AG04449 (cell line): ENCODE measurements at regions of chr19 and their contacts with region 1.

Region 1: DNA sequence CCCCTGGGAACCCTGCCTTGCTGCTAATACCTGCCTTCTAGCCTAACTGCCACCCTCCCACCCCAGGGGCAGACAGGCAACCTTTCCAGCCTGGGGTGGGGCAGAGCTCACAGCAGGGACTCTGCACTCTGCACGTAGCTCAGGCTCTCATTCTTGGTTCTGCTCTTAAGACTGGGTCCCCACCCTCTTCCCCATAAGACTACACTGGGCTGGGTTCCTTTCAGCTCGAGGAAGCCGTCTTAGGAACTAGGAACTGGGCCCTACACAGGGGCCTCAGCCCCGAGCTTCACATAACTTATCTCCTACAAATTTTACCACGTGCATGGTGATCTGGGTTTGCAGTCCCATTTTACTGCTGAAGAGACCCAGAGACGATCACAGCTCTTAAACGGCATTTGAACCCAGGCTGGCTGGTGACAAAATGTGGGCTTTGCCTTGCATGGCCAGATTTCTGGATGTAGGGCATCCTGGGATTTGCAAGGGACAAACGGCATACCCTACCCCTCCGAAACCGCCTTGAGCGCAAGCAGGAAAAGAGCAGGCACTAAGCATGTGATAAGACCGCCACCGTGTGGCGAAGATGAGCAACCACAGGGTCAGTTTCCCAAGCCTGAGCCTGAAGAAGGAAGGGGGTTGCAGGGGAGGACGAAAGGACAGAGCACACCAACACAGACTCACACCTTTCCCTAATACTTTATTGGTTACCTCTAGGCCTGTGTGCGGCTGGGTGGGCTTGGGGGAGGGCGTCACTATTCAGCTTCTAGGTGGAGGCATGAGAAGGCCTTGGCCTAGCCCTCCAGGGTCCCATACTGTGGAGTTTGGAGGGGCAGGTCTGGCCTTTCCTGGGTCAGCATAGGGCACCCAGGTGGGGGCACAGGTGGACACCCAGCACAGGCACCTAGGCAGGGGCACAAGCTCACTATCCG is 5.1 kb downstream of the JUNB start:
- DNase-seq: no peak
- H3K4me3 ChIP-seq: no peak overlapping the region
- CTCF ChIP-seq: peak; percentile 92

Region 2: DNA sequence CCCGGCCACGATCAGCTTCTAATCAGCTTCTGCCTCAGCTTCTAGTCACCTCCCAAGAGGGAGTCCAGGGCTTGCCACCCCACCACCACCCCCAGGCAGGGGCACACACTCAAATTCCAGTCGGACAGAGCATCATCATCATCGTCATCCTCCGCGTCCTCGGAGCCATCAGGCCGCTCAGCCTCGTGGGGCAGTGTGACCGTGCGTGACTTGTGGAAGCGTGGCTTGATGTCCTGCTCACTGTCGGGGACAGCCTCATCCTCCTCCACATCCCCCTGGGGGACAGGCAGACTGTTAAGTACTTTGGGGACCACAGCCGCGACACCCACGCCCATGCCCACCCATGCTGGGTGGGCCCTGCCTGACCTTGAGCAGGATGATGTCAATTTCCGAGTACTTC is 85.2 kb before region 1 on chr19:
- CTCF ChIA-PET with region 1: interaction called, 13 read pairs
- POLR2A ChIA-PET with region 1: no interaction called
- DNase-seq: no peak
- H3K4me3 ChIP-seq: no peak overlapping the region
- CTCF ChIP-seq: no peak

Region 3: DNA sequence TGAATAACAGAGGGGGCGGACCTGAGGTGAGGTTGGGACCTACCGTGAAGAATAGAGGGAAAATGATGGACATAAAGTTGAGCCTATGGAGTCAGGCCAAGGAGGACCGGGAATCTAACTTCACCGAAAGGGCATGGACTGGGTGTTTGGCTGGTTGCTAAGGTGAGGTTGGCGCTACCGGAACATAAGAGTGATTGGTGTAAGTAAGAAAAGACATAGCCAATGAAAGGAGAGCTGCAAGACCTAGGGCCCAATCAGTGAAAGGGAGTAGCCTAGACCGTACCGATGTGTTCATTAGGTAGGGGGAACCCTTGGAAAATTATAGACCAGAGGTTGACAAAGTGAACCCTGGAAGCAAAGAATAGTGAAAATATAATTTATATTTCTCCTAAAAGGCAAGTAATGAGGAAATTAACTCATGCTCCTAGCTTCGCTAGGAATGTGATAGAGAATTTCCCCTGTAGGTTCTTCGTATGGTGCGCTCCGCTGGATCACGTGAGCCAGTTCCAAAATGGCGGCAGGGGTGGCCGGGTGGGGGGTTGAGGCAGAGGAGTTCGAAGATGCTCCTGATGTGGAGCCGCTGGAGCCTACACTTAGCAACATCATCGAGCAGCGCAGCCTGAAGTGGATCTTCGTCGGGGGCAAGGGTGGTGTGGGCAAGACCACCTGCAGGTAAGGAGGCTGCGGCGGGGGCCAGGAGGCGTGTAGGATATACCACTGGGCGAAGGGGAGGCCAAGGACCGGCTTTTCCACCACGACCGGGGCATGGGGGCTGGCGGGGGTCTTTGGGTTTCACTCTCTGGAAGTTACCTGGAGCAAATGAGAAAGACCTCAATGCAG is 59.2 kb before region 1 on chr19 and contains the start of gene GET3:
- CTCF ChIA-PET with region 1: interaction called, 20 read pairs
- POLR2A ChIA-PET with region 1: interaction called, 17 read pairs
- DNase-seq: peak; percentile 100
- H3K4me3 ChIP-seq: peak within 1 kb of the TSS; percentile 93
- CTCF ChIP-seq: no peak

Region 4: GRCh38 chr19:12782229-12783028 is 14.0 kb before region 1 on chr19:
- CTCF ChIA-PET with region 1: interaction called, 1,565 read pairs
- POLR2A ChIA-PET with region 1: interaction called, 158 read pairs
- DNase-seq: no peak
- H3K4me3 ChIP-seq: peak overlapping the region; percentile 55
- CTCF ChIP-seq: peak; percentile 31

Region 5: DNA sequence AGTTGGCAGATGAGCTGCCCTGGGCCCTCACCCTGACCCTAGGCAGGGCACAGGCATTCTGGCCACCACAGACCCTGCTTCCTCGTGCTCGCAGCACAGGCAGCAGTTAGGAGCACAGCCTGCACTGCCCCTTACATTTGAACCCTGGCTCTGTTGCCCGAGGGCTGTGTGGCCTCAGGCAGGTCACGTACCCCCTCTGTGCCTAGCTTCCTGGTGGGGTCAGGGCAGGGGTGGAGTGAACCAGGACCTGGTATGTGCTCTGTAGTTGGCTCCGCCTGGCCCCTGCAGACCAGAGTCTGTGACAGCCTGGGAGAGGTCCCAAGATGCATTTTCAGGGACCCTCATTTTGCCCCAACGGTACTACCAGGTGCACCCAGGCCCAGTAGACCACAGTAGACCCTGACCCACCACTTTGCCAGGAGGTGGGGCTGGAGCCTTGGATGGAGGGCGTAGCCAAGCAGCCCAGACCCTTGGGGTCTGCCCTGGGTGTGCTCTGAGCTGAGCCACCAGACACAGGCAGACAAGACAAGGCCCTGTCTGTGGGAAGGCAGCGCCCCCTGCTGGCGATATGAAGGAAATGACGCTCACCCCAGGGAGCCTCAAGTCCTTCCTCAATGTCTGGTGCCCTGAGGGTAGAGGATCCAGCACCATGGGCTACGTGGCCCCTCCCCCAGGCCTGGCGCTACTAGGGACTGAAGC is 297.1 kb after region 1 on chr19:
- CTCF ChIA-PET with region 1: no interaction called
- POLR2A ChIA-PET with region 1: no interaction called
- DNase-seq: no peak
- H3K4me3 ChIP-seq: no peak overlapping the region
- CTCF ChIP-seq: peak; percentile 90